ENCODE measurements at regions of chr9 and their contacts with region 1.

Region 1: GRCh38 chr9:94065535-94065961 is 18.7 kb upstream of the PTPDC1 start:
- DNase-seq: peak; percentile 67
- ATAC-seq: peak; percentile 80

Region 2: DNA sequence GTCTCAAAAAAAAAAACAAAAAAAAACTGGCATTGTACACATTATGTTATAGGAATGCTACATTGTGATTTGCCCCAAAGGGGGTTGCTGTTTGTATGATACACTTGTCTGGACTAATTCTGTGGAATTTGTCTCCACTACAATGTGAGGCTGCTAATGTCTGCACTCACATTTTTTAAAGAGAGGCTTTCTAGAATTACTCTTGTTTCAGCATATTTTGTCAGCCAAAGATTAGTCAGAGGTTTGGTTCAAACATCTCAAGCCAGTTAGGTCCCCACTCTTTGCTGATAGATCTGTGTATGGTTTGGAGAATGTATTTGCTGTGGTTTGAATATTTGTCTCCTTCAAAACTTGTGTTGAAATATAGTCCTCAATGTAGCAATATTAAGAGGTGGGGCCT is 134.2 kb after region 1 on chr9:
- intact Hi-C with region 1: loop called (anchors 10 kb)
- DNase-seq: no peak
- ATAC-seq: no peak

Region 3: DNA sequence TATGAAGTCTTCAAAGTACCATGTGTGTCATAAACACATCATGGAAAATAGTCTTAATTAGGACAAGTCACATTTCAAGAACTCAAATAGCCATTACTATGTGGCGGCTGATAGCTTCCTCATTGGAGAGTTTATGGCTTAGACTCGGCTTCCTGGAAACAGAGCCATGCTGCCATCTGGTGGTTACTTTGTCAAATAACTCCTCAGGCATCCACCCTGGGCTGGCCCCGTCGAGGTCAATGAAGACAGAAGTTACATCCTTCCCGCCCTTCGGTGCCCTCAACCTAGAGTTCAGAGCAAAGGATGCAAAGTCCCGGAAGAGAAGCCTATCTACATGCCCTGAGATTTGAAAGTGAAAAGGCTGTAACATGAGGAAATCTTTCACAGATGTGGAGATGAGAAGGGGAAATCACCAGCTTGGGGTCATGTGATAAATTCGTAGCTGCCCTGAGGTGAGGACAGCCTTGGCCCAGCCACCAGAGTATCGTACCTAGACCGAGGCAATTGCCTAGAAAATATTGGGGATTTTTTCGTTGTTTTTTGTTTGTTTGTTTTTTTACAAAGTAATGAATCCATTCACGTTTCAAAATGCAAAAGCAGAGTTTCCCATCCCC is 148.1 kb after region 1 on chr9:
- intact Hi-C with region 1: loop called (anchors 2 kb)
- DNase-seq: peak; percentile 72
- ATAC-seq: peak; percentile 97